HepG2 (cell line): ENCODE measurements at regions of chr6 and their contacts with region 1.

Region 1: DNA sequence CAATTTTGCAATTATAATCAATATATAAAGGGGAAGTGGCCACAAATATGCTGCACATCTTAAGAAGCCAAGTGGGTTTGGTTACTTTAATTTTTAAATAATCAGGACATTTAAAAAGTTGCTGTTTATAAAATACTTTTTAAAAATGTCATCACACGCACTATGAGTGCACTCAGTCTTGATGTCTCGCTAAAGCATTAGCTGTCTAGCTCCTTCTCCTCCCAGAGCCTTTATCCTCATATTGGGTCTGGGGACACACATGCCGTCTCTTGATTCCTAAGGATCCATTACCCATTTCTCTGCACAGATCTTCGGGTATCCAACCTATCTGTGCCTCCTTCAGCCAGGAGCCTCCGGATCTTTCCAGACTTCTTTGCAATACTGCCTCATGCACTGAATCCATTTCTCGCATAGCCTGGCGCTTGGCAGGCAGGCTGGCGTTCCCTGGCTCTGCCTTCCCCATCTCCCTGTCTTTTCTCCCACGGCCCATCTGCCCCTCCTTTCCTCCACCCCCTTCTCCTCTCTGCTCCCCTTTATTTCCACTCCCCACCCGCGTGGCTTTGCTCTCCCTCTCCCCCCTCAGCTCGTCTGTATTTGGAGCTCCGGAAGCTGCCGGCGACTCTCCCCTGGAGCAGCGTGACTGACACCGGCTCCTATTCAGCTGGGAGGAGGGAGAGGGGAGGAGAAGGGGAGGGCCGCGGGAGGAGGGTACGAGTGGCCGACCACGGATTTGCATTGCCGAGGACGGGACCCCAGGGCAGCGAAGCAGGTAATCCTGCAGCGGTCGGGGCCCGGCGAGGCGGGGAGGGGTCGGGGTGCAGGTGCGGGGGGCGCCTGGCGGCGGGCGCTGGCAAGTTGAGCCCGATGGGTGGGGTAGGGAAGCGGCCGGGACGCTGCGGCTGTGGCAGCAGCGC is at the start of gene CAP2:
- DNase-seq: peak; percentile 65
- ATAC-seq: peak; percentile 92
- H3K4me3 ChIP-seq: peak within 1 kb of the TSS; percentile 86 to 89 (median 86)
- H3K27ac ChIP-seq: peak within 1 kb of the TSS; percentile 55
- H3K4me1 ChIP-seq: peaks cover 43% of the 10 kb centered on the region
- H3K27me3 ChIP-seq: peaks cover 0 to 6% of the 10 kb centered on the region in 2 experiments; a peak in 1 of 5 replicates
- CTCF ChIP-seq: peak; percentile 13; the same call in 1 of the 2 replicates
- EP300 ChIP-seq: peak in 1 of 2 experiments; percentile 11; a peak in 1 of 4 replicates
- POLR2A ChIP-seq: peak in 1 of 2 experiments; percentile 42; a peak in 2 of 4 replicates
- RAD21 ChIP-seq: no peak
- total RNA-seq, gene CAP2: 7.9 and 8.8 TPM in 2 replicates

Region 2: GRCh38 chr6:17281100-17281494 is 112.1 kb before region 1 on chr6 and contains the start of gene RBM24:
- CTCF ChIA-PET with region 1: no interaction called
- POLR2A ChIA-PET with region 1: no interaction called
- in situ Hi-C with region 1: no loop called
- intact Hi-C with region 1: loop called (anchors 2 kb)
- DNase-seq: peak; percentile 66
- ATAC-seq: peak; percentile 79
- H3K4me3 ChIP-seq: peak within 1 kb of the TSS; percentile 82 to 94 (median 93)
- H3K27ac ChIP-seq: no peak within 1 kb of the TSS
- H3K4me1 ChIP-seq: peaks cover 20% of the 10 kb centered on the region
- H3K27me3 ChIP-seq: peaks cover 0 to 7% of the 10 kb centered on the region in 2 experiments; a peak in 1 of 5 replicates
- CTCF ChIP-seq: peak; percentile 64
- EP300 ChIP-seq: no peak
- POLR2A ChIP-seq: no peak
- RAD21 ChIP-seq: peak; percentile 67
- total RNA-seq, gene RBM24: 1.2 and 1.5 TPM in 2 replicates

Region 3: GRCh38 chr6:17311595-17312311 is 81.5 kb before region 1 on chr6:
- CTCF ChIA-PET with region 1: no interaction called
- POLR2A ChIA-PET with region 1: interaction called, 15 read pairs
- in situ Hi-C with region 1: no loop called
- intact Hi-C with region 1: no loop called
- DNase-seq: peak; percentile 98
- ATAC-seq: peak; percentile 95
- H3K4me3 ChIP-seq: peak overlapping the region; percentile 9 to 60 (median 41)
- H3K27ac ChIP-seq: peak overlapping the region; percentile 88
- H3K4me1 ChIP-seq: peaks cover 50% of the 10 kb centered on the region
- H3K27me3 ChIP-seq: no peaks in the 10 kb centered on the region
- CTCF ChIP-seq: no peak
- EP300 ChIP-seq: peak in 1 of 2 experiments; percentile 94; a peak in 3 of 4 replicates
- POLR2A ChIP-seq: peak; percentile 49 to 72; a peak in 3 of 4 replicates
- RAD21 ChIP-seq: no peak

Region 4: DNA sequence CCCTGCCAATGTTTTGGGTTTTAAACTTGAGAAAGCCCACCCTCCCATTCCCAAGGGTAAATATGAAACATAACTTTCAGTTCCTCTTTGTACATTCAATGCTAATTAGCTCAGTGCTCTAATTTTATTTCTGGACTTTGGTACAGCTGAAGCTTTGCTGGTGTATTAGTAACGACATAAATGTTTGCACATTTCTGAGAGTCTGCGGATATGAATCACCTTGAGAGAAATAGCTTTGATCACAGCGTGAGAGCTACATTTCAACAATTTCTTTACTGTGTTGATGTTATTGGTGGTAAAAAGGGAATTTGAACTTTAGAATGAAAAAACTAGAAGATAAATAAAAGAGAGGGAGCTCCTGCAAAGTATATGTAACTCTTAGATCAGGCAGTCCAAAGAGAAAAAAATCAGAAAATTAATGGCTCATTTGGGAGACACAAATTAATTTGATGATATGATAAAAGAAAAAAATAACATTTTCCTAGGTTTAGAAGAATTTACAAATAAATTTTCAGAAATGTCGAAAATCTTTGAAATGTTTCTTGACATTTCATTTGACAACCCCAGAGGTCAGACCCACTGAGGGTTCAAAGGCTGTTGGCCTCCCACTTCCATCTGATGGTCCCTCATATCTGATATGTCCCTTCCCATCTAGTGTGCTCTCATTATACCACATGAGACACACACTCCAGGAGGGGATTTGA is 38.4 kb before region 1 on chr6:
- CTCF ChIA-PET with region 1: no interaction called
- POLR2A ChIA-PET with region 1: interaction called, 33 read pairs
- in situ Hi-C with region 1: no loop called
- intact Hi-C with region 1: loop called (anchors 2 kb)
- DNase-seq: peak; percentile 99
- ATAC-seq: peak; percentile 95
- H3K4me3 ChIP-seq: peak overlapping the region in 2 of 3 experiments; percentile 0 to 31; a peak in 2 of 6 replicates
- H3K27ac ChIP-seq: peak overlapping the region; percentile 82
- H3K4me1 ChIP-seq: peaks cover 72% of the 10 kb centered on the region
- H3K27me3 ChIP-seq: no peaks in the 10 kb centered on the region
- CTCF ChIP-seq: no peak
- EP300 ChIP-seq: peak; percentile 44 to 96; a peak in 2 of 4 replicates
- POLR2A ChIP-seq: no peak; a peak in 1 of 4 replicates
- RAD21 ChIP-seq: no peak

Region 5: GRCh38 chr6:18135181-18135812 is 742.1 kb after region 1 on chr6:
- CTCF ChIA-PET with region 1: no interaction called
- POLR2A ChIA-PET with region 1: no interaction called
- in situ Hi-C with region 1: no loop called
- intact Hi-C with region 1: no loop called
- DNase-seq: no peak
- ATAC-seq: no peak
- H3K4me3 ChIP-seq: no peak overlapping the region
- H3K27ac ChIP-seq: no peak overlapping the region
- H3K4me1 ChIP-seq: no peaks in the 10 kb centered on the region
- H3K27me3 ChIP-seq: no peaks in the 10 kb centered on the region
- CTCF ChIP-seq: no peak
- EP300 ChIP-seq: no peak
- POLR2A ChIP-seq: no peak
- RAD21 ChIP-seq: no peak